Activated CD4-positive, alpha-beta T cell treated with anti-CD3 and anti-CD28 coated beads, Interleukin-2, amount 10 ng/mL, durations not matched to agents 24 days and 14 days (primary cell): ENCODE measurements at regions of chr2 and their contacts with region 1.

Region 1: GRCh38 chr2:64523666-64524603 is at the start of gene AFTPH:
- DNase-seq: peak; percentile 100
- H3K4me3 Mint-ChIP-seq: peak within 1 kb of the TSS; percentile 97
- H3K27ac Mint-ChIP-seq: peak within 1 kb of the TSS; percentile 100
- H3K4me1 Mint-ChIP-seq: peaks cover 40% of the 10 kb centered on the region
- H3K27me3 Mint-ChIP-seq: peaks cover 8% of the 10 kb centered on the region
- total RNA-seq, gene AFTPH: 39.1 and 39.6 TPM in 2 replicates

Region 2: GRCh38 chr2:64036034-64036705 is 487.8 kb before region 1 on chr2:
- intact Hi-C with region 1: loop called (anchors 5 kb)
- DNase-seq: peak; percentile 82
- H3K4me3 Mint-ChIP-seq: peak overlapping the region; percentile 22
- H3K27ac Mint-ChIP-seq: peak overlapping the region; percentile 76
- H3K4me1 Mint-ChIP-seq: peaks cover 42% of the 10 kb centered on the region
- H3K27me3 Mint-ChIP-seq: no peaks in the 10 kb centered on the region

Region 3: DNA sequence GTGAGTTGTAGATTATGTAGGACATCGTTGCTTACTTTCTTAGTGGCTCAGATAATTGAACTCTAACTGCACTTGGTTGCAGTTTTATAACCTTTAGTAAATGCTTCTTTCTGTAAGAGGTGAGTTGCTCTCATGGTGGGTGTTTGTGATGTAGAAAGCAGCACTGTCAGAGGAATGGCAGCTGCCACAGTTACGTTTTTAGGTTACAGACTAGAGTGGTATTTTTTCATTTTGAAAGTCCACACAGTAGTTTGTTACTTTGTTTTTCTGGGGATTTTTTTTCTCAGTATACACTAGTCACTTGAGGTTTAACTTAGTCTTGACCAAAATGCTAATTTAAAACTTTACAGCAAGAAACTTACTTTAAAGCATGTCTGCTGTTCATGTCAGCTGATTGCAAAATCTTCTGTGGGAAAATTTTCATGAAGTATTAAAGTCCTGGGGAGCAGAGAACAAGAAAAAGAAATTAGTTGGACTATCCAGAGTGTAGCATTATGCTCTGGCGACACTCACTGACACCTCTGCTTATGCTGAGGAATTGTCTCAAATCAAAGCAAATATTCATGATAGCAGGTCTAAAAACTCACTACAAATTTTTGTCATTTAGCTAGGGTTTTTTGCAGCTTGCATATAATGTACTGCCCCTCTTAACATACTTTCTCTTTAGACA is 15.0 kb after region 1 on chr2:
- intact Hi-C with region 1: loop called (anchors 1 kb)
- DNase-seq: no peak
- H3K4me3 Mint-ChIP-seq: peak overlapping the region; percentile 38
- H3K27ac Mint-ChIP-seq: peak overlapping the region; percentile 47
- H3K4me1 Mint-ChIP-seq: peaks cover 50% of the 10 kb centered on the region
- H3K27me3 Mint-ChIP-seq: no peaks in the 10 kb centered on the region

Region 4: GRCh38 chr2:64653349-64654062 is 129.6 kb after region 1 on chr2 and contains the start of gene SERTAD2:
- intact Hi-C with region 1: loop called (anchors 1 kb)
- DNase-seq: peak; percentile 96
- H3K4me3 Mint-ChIP-seq: peak within 1 kb of the TSS; percentile 95
- H3K27ac Mint-ChIP-seq: peak within 1 kb of the TSS; percentile 92
- H3K4me1 Mint-ChIP-seq: peaks cover 65% of the 10 kb centered on the region
- H3K27me3 Mint-ChIP-seq: no peaks in the 10 kb centered on the region
- total RNA-seq, gene SERTAD2: 24.6 and 26.7 TPM in 2 replicates

Region 5: GRCh38 chr2:64767670-64768468 is 243.9 kb after region 1 on chr2:
- intact Hi-C with region 1: loop called (anchors 5 kb)
- DNase-seq: peak; percentile 93
- H3K4me3 Mint-ChIP-seq: peak overlapping the region; percentile 92
- H3K27ac Mint-ChIP-seq: peak overlapping the region; percentile 97
- H3K4me1 Mint-ChIP-seq: peaks cover 40% of the 10 kb centered on the region
- H3K27me3 Mint-ChIP-seq: peaks cover 2% of the 10 kb centered on the region

Region 6: DNA sequence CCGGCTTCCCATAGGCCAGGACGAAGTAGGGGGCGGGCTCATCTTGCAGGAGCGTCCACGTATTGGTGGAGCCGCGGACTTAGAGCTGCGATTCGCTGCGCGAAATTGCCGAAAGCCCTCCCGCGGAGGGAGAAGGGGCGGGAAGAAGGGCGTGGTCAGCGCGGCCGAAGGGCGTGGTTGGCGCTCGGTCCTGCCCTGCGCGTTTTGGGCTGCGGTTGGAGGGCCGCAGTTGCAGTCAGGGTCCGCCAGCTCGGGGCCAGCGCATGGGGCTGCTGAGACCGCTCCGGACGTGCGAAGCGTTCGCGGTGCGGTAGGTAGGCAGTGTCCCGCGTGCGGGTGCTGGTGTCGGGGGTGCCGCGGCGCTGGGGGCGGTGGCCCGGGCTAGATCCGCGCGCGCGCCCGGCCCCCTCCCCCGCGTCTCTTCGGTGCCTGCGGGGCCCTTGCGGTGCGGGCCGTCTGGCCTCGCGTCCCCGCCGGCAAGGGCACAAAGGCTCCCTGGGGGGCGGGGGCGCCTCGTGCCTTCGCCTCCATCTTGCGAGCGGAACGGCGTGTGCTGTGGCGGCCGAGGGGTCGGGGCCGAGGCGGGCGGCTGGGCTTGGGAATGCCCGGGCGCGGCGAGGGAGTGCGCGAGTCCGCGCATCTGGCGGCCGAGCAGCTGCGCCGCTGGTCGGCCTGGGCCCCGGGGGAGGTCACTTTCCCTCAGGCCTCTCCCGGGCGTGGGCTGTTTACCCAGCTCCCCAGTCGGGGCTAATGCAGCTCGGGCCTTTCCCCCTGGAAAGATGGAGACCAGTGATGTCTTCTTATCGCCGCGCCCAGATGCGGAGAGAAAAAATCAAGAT is 532.5 kb after region 1 on chr2 and contains the start of gene CEP68:
- intact Hi-C with region 1: loop called (anchors 2 kb)
- DNase-seq: peak; percentile 99
- H3K4me3 Mint-ChIP-seq: peak within 1 kb of the TSS; percentile 97
- H3K27ac Mint-ChIP-seq: peak within 1 kb of the TSS; percentile 87
- H3K4me1 Mint-ChIP-seq: peaks cover 50% of the 10 kb centered on the region
- H3K27me3 Mint-ChIP-seq: peaks cover 2% of the 10 kb centered on the region
- total RNA-seq, gene CEP68: 4.4 and 4.9 TPM in 2 replicates